ENCODE measurements at regions of chr6 and their contacts with region 1.

Region 1: DNA sequence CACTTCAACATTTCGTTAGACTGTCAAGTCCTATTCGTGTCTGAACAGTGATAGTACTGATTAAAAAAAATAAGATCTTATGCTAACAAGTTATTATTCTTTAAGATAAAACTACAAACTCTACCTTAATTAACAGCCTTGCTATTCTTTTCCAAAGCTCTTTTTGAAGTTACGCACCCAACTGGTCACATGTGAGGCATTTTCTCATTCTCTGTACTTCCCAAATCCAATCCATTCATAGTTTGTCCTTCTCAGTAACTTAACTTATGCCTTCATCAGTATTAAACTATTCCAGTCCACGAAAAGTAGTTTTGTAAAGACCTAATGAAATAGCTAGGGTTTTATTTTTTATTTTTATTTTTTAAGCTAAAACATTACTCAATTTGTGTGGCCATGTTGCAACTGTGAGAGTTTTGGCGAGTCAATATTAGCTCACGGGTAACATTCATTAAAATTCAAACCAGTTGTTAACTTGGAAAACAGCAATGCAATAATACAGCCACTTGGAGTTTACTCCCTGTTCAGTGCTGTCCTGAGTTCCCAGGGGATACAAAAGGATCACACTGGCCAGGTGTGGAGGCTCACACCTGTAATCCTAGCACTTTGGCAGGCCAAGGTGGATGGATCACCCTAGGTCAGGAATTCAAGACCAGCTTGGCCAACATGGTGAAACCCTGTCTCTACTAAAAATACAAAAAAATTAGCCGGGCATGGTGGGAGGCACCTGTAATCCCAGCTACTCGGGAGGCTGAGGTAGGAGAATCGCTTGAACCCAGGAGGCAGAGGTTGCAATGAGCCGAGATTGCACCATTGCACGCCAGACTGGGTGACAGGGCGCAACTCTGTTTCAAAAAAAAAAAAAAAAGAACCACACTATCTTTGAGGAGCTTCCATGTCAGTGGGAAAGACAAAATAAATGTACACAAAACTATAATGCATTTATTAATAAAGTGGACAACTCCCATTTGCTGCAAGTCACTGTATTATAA is 27.9 kb upstream of the EEF1A1 start:
- DNase-seq: peak; percentile 52
- ATAC-seq: peak; percentile 93
- H3K4me3 ChIP-seq: no peak overlapping the region
- H3K27ac ChIP-seq: peak overlapping the region; percentile 45
- H3K4me1 ChIP-seq: peaks cover 22% of the 10 kb centered on the region
- H3K27me3 ChIP-seq: no peaks in the 10 kb centered on the region
- CTCF ChIP-seq: no peak
- EP300 ChIP-seq: no peak
- POLR2A ChIP-seq: no peak
- RAD21 ChIP-seq: no peak

Region 2: GRCh38 chr6:73580247-73581149 is 31.7 kb after region 1 on chr6:
- CTCF ChIA-PET with region 1: no interaction called
- POLR2A ChIA-PET with region 1: interaction called, 12 read pairs
- in situ Hi-C with region 1: no loop called
- intact Hi-C with region 1: no loop called
- DNase-seq: peak; percentile 93
- ATAC-seq: peak; percentile 96
- H3K4me3 ChIP-seq: peak overlapping the region; percentile 45 to 67 (median 63)
- H3K27ac ChIP-seq: peak overlapping the region; percentile 99
- H3K4me1 ChIP-seq: peaks cover 50% of the 10 kb centered on the region
- H3K27me3 ChIP-seq: no peaks in the 10 kb centered on the region; a peak in 1 of 5 replicates
- CTCF ChIP-seq: peak; percentile 70
- EP300 ChIP-seq: peak in 1 of 2 experiments; percentile 83; a peak in 1 of 4 replicates
- POLR2A ChIP-seq: 0 out of 4 replicates have a peak, but pooled peaks of 1 of the 2 experiments have one; percentile 30
- RAD21 ChIP-seq: peak; percentile 55; the same call in 1 of the 2 replicates

Region 3: GRCh38 chr6:73644941-73645591 is 96.3 kb after region 1 on chr6:
- CTCF ChIA-PET with region 1: no interaction called
- POLR2A ChIA-PET with region 1: no interaction called
- in situ Hi-C with region 1: no loop called
- intact Hi-C with region 1: no loop called
- DNase-seq: no peak
- ATAC-seq: no peak
- H3K4me3 ChIP-seq: no peak overlapping the region
- H3K27ac ChIP-seq: no peak overlapping the region
- H3K4me1 ChIP-seq: no peaks in the 10 kb centered on the region
- H3K27me3 ChIP-seq: no peaks in the 10 kb centered on the region; a peak in 1 of 5 replicates
- CTCF ChIP-seq: no peak
- EP300 ChIP-seq: no peak
- POLR2A ChIP-seq: no peak
- RAD21 ChIP-seq: no peak

Region 4: DNA sequence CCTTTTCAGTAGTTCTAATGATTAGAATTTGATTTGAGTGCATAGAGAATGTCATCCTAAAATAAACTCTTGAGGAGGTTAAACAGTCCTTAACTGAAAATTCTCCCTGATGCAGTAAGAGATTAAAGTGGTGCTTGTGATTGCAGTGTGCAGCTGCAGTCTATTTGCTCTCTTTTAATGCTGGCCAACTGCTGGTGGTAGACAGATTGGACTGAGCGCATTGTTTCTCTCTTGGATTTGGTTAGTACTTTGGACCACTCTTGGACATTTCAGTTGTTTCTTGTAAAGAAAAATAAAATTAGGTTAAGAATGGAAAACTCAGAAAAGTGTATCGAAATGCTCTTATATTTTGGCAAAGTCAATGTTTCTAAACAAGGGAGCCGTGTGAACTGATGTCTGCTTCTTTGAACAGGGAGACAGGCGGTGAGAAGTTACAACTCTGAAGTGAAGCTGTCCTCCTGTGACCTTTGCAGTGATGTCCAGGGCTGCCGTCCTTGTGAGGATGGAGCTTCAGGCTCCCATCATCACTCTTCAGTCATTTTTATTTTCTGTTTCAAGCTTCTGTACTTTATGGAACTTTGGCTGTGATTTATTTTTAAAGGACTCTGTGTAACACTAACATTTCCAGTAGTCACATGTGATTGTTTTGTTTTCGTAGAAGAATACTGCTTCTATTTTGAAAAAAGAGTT is 274.4 kb after region 1 on chr6:
- CTCF ChIA-PET with region 1: no interaction called
- POLR2A ChIA-PET with region 1: no interaction called
- in situ Hi-C with region 1: no loop called
- intact Hi-C with region 1: no loop called
- DNase-seq: no peak
- ATAC-seq: no peak
- H3K4me3 ChIP-seq: no peak overlapping the region
- H3K27ac ChIP-seq: no peak overlapping the region
- H3K4me1 ChIP-seq: no peaks in the 10 kb centered on the region
- H3K27me3 ChIP-seq: no peaks in the 10 kb centered on the region
- CTCF ChIP-seq: no peak
- EP300 ChIP-seq: no peak
- POLR2A ChIP-seq: no peak
- RAD21 ChIP-seq: no peak